ENCODE measurements at regions of chr20 and their contacts with region 1.

Region 1: GRCh38 chr20:64053841-64054661 is 4.6 kb upstream of the SOX18 start:
- DNase-seq: no peak
- H3K4me3 ChIP-seq: no peak overlapping the region
- H3K27ac ChIP-seq: no peak overlapping the region
- H3K4me1 ChIP-seq: peaks cover 0 to 28% (median 15%) of the 10 kb centered on the region in 4 experiments; a peak in 6 of 7 replicates
- H3K27me3 ChIP-seq: peaks cover 15 to 30% (median 22%) of the 10 kb centered on the region in 4 experiments
- CTCF ChIP-seq: peak; percentile 53 to 67 (median 64)
- EP300 ChIP-seq: no peak
- POLR2A ChIP-seq: no peak
- RAD21 ChIP-seq: peak; percentile 47 to 59; a peak in 3 of 4 replicates

Region 2: DNA sequence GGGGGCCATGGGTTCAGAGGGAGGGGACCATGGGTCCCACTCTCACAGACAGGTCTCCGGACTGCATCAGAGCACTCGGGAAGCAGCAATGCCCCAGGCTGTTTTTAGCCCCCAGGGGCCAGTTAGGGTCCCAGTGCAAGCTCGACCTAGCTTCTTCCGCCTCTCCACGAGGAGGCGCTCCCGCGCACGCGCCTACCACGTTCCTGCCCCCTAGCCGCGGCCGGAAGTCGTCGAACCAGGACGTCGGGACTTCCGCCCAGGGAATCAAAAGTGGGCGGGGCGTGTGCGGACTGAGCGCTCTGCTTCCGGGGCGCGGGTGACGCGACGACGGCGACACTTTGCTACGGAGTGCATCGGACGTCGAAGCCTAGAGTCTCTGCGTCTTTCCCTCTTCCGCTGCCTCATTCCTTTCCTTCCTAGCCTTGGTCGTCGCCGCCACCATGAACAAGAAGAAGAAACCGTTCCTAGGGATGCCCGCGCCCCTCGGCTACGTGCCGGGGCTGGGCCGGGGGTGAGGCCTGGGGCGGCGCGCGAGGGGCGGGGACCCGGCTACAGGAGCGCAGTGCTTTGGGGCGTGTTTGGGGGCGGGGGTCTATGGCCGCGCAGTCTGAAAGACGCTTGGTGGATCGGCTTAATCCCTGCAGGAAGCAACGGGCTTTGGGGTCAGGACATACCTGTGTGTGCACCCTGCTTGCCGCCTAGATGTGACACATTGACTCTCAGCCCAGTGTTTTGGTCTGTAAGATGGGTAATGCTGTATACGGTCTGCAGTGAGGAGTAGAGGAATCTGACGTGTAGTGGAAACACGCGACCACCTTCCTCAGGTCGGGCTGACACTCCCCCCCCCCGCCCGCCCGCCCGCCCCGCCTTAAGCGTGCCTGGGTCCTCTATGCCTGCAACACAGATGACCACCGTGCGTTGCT is 73.0 kb before region 1 on chr20 and contains the start of gene PRPF6:
- CTCF ChIA-PET with region 1: interaction called, 11 read pairs
- POLR2A ChIA-PET with region 1: interaction called, 4 read pairs
- DNase-seq: peak; percentile 94 to 95
- H3K4me3 ChIP-seq: peak within 1 kb of the TSS; percentile 68 to 89 (median 83)
- H3K27ac ChIP-seq: peak within 1 kb of the TSS; percentile 88
- H3K4me1 ChIP-seq: peaks cover 4 to 24% (median 12%) of the 10 kb centered on the region in 4 experiments; a peak in 6 of 7 replicates
- H3K27me3 ChIP-seq: peaks cover 0 to 9% (median 2%) of the 10 kb centered on the region in 4 experiments; a peak in 3 of 7 replicates
- CTCF ChIP-seq: peak; percentile 97 to 100 (median 98)
- EP300 ChIP-seq: peak in 1 of 2 experiments; percentile 36; a peak in 1 of 3 replicates
- POLR2A ChIP-seq: peak in 1 of 2 experiments; percentile 87; a peak in 2 of 3 replicates
- RAD21 ChIP-seq: peak; percentile 35 to 47; a peak in 3 of 4 replicates
- total RNA-seq, gene PRPF6: 76.9 and 80.7 TPM in 2 replicates

Region 3: DNA sequence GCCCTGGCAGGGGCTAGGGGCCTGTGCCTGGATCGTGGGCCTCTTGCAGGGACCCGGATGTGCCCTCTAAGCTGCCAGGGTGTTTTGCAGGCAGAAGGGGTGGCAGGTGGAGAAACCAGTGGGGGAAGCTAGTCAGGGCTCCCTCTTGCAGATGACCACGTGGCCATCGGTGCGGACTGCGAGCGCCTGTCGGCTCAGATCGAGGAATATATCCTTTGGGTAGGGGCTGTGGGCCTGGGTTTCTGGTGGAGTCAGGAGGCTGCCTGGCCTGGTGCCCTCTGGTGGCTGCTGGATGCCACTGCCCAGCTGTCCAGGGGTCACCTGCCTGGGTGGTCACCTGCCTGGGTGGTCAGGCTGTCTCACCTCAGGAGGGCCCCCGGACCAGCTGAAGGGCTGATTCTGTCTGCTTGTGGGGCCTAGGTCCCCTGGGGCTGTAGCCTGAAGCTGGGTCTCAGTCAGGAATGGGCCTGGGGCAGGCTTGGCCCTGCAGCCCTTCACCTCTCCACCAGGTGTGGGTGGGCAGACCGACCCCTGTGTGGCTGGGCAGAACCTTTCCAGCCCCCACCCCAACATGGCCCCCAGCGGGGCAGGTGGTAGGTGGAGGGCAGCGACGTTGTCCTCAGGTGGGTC is 15.7 kb after region 1 on chr20:
- CTCF ChIA-PET with region 1: interaction called, 139 read pairs
- POLR2A ChIA-PET with region 1: interaction called, 5 read pairs
- DNase-seq: peak in 1 of 2 experiments; percentile 89
- H3K4me3 ChIP-seq: no peak overlapping the region
- H3K27ac ChIP-seq: no peak overlapping the region
- H3K4me1 ChIP-seq: peaks cover 0 to 16% (median 5%) of the 10 kb centered on the region in 4 experiments; a peak in 6 of 7 replicates
- H3K27me3 ChIP-seq: no peaks in the 10 kb centered on the region
- CTCF ChIP-seq: peak; percentile 84 to 97 (median 94)
- EP300 ChIP-seq: peak; percentile 35; a peak in 1 of 3 replicates
- POLR2A ChIP-seq: no peak
- RAD21 ChIP-seq: peak; percentile 53 to 69